ENCODE measurements at regions of chr11 and their contacts with region 1.

Region 1: DNA sequence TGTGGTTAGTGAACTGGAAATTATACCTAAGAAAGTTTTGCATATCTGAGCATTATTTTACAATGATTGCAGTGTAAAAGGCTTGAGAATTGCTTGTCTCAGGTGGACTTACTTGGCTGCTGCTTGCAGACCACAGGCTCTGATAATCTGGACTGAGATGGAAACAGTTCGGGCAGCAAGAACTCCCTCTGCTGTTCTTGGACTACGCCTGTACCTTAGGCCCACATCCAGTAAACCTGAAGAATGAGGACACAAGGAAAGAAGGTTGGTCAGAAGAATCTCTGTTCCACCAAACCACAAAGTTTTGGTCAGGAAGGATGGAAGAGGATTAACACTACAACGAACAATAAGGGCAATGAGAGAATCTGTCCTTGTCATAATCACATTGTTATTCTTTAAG is 80.1 kb downstream of the C2CD3 start:
- DNase-seq: peak; percentile 52
- ATAC-seq: peak; percentile 80
- H3K4me3 ChIP-seq: no peak overlapping the region
- H3K27ac ChIP-seq: no peak overlapping the region
- H3K4me1 ChIP-seq: peaks cover 2% of the 10 kb centered on the region
- H3K27me3 ChIP-seq: no peaks in the 10 kb centered on the region
- CTCF ChIP-seq: peak; percentile 72

Region 2: DNA sequence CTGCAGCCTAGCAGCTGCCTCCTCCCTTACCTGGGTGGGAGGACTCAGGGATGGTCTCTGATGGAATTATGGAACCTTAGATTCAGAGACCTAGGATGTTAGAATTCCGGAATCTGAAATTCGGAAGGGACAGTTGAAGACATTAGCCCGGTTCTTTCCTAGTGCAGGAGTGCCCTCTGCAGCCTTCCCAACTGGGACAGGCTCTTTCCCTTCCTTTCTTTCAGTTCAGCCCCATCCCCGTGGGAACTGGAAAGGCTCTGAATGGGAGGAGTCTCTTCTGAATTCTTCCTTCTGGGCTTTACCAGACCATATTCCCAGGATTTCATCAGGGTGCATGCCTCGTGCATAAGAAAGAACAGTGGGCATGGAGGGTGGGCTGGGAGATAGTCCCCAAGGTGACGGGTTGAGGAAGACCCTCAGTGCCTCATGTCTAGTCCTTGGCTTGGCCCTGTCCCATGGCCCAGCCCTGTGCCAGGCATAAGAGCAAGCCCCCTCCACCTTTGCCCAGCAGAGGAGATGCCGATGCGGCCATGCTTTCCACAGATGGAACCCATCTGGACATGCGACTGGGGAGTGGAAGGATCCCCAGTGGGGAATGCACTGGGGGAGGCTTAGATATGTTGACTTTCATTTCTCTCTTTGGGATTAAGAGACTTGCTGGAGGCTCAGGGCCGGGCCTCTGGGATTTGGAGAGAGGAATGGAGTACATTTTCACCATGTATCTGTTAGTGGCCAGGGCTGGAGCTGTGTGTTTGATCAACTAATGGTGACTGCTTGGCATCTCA is 125.4 kb before region 1 on chr11:
- CTCF ChIA-PET with region 1: no interaction called
- POLR2A ChIA-PET with region 1: no interaction called
- intact Hi-C with region 1: loop called (anchors 1 kb)
- DNase-seq: peak; percentile 58
- ATAC-seq: peak; percentile 65
- H3K4me3 ChIP-seq: peak overlapping the region; percentile 60
- H3K27ac ChIP-seq: no peak overlapping the region
- H3K4me1 ChIP-seq: peaks cover 7% of the 10 kb centered on the region
- H3K27me3 ChIP-seq: no peaks in the 10 kb centered on the region
- CTCF ChIP-seq: peak; percentile 42; the same call in 1 of the 2 replicates

Region 3: GRCh38 chr11:73989156-73989555 is 101.5 kb before region 1 on chr11:
- CTCF ChIA-PET with region 1: no interaction called
- POLR2A ChIA-PET with region 1: no interaction called
- intact Hi-C with region 1: loop called (anchors 2 kb)
- DNase-seq: peak; percentile 44
- ATAC-seq: no peak
- H3K4me3 ChIP-seq: no peak overlapping the region
- H3K27ac ChIP-seq: no peak overlapping the region
- H3K4me1 ChIP-seq: no peaks in the 10 kb centered on the region
- H3K27me3 ChIP-seq: no peaks in the 10 kb centered on the region
- CTCF ChIP-seq: peak; percentile 59

Measured in PC-3 (cell line).